H1 (cell line): ENCODE measurements at regions of chr12 and their contacts with region 1.

Region 1: DNA sequence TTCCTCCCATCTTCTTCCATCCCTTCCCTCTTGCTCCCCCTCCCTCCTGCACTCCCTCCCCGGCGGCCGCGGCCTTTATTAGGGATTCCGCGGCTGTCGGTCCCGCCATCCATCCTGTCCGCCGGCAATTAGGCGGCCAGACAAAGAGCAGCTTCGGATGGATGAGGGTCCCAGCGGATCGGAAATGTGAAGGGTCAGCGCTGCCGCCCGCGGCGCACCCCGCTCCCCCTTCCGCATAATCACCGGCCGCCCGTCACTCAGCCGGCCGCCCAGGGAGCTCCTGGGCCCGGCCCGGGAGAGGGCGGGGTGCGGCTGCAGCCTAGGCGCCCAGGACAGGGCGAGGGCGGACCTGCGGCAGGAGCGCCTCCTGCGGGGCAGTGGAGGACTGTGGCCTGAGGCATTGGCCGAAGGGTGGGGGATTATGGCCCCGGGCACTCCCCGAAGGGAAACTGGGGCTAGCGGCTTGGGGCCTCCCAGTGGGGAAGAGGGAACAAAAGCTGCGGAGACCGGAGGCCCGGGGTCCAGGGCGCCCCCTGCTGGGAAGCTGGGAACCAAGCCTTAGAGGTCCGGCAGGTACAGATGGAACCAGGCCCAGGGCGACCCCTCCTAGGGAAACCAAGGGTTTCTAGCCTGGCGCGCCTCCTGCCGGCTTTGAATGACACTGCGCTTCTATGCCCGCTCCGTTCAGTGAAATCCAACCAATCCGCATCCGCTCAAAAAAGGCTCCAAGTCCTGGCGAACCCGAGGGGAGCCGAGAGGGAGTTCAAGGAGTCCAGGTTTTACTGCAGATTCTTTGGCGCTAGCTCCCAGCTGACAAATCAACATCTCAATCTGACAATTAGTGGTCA is 4.4 kb upstream of the DNAJC22 start:
- DNase-seq: peak; percentile 93 to 99
- H3K4me3 ChIP-seq: peak overlapping the region; percentile 34 to 78 (median 67)
- H3K27ac ChIP-seq: no peak overlapping the region
- H3K4me1 ChIP-seq: peaks cover 4 to 61% (median 41%) of the 10 kb centered on the region in 4 experiments
- H3K27me3 ChIP-seq: peaks cover 81 to 99% (median 97%) of the 10 kb centered on the region in 4 experiments
- CTCF ChIP-seq: peak; percentile 71 to 93 (median 90)
- EP300 ChIP-seq: no peak; a peak in 1 of 3 replicates
- POLR2A ChIP-seq: no peak
- RAD21 ChIP-seq: peak; percentile 59 to 63

Region 2: DNA sequence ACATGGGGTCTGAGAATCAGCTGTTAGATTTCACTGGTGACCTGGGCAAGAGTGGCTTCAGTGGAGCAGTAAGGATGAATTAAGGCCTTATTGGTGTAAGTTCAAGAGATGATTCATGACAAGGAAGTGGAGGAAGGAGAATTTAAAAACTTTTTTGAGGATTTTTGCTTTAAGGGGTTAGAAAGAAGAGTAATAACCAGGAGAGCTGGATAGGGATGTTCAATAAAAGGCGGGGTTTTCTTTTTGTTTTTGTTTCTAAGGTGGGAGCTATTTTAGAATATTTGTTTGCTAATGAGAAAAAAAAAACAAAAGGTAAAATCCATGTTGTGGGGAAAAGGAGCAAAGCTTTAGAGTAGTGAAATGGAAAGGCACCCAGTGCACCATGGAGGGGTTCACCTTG is 195.9 kb before region 1 on chr12:
- CTCF ChIA-PET with region 1: no interaction called
- POLR2A ChIA-PET with region 1: no interaction called
- DNase-seq: no peak
- H3K4me3 ChIP-seq: no peak overlapping the region
- H3K27ac ChIP-seq: no peak overlapping the region
- H3K4me1 ChIP-seq: no peaks in the 10 kb centered on the region
- H3K27me3 ChIP-seq: no peaks in the 10 kb centered on the region
- CTCF ChIP-seq: no peak
- EP300 ChIP-seq: no peak
- POLR2A ChIP-seq: no peak
- RAD21 ChIP-seq: no peak

Region 3: DNA sequence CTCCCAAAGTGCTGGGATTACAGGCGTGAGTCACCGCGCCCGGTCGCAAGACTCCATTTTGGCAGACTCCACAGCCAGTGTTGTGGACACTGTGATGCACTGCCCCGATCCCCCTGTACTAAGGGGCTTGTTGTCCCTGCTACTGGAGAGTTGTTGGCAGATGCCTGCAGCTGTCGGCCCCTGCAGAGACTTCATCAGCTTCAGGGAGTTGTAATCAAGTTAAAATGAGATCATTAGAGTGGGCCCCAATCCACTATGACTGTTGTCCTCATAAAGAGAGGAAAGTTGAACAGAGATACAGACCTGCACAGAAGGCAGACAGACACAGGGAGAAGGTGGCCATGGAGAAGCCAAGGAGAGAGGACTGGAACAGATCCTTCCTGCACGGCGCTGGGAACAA is 129.7 kb before region 1 on chr12:
- CTCF ChIA-PET with region 1: no interaction called
- POLR2A ChIA-PET with region 1: no interaction called
- DNase-seq: no peak
- H3K4me3 ChIP-seq: no peak overlapping the region
- H3K27ac ChIP-seq: no peak overlapping the region
- H3K4me1 ChIP-seq: peaks cover 0 to 6% (median 4%) of the 10 kb centered on the region in 4 experiments; a peak in 4 of 7 replicates
- H3K27me3 ChIP-seq: no peaks in the 10 kb centered on the region
- CTCF ChIP-seq: no peak
- EP300 ChIP-seq: no peak
- POLR2A ChIP-seq: no peak
- RAD21 ChIP-seq: no peak

Region 4: GRCh38 chr12:49279706-49280159 is 62.6 kb before region 1 on chr12:
- CTCF ChIA-PET with region 1: interaction called, 10 read pairs
- POLR2A ChIA-PET with region 1: interaction called, 4 read pairs
- DNase-seq: no peak
- H3K4me3 ChIP-seq: no peak overlapping the region
- H3K27ac ChIP-seq: no peak overlapping the region
- H3K4me1 ChIP-seq: peaks cover 0 to 7% (median 5%) of the 10 kb centered on the region in 4 experiments; a peak in 3 of 7 replicates
- H3K27me3 ChIP-seq: no peaks in the 10 kb centered on the region
- CTCF ChIP-seq: no peak
- EP300 ChIP-seq: no peak
- POLR2A ChIP-seq: no peak
- RAD21 ChIP-seq: no peak

Region 5: GRCh38 chr12:49296034-49296835 is 46.1 kb before region 1 on chr12:
- CTCF ChIA-PET with region 1: interaction called, 276 read pairs
- POLR2A ChIA-PET with region 1: interaction called, 26 read pairs
- DNase-seq: peak in 1 of 2 experiments; percentile 91
- H3K4me3 ChIP-seq: peak overlapping the region; percentile 4 to 59 (median 34); a peak in 7 of 8 replicates
- H3K27ac ChIP-seq: no peak overlapping the region
- H3K4me1 ChIP-seq: peaks cover 0 to 36% (median 17%) of the 10 kb centered on the region in 4 experiments; a peak in 6 of 7 replicates
- H3K27me3 ChIP-seq: peaks cover 50 to 72% (median 68%) of the 10 kb centered on the region in 4 experiments
- CTCF ChIP-seq: peak in 2 of 3 experiments; percentile 89; a peak in 3 of 4 replicates
- EP300 ChIP-seq: no peak
- POLR2A ChIP-seq: no peak
- RAD21 ChIP-seq: peak; percentile 31 to 42; a peak in 2 of 4 replicates

Region 6: GRCh38 chr12:49322708-49323523 is 19.4 kb before region 1 on chr12 and contains the start of gene TROAP:
- CTCF ChIA-PET with region 1: interaction called, 33 read pairs
- POLR2A ChIA-PET with region 1: interaction called, 14 read pairs
- DNase-seq: peak; percentile 94 to 95
- H3K4me3 ChIP-seq: peak within 1 kb of the TSS; percentile 87 to 96 (median 90)
- H3K27ac ChIP-seq: peak within 1 kb of the TSS; percentile 66
- H3K4me1 ChIP-seq: peaks cover 4 to 13% (median 6%) of the 10 kb centered on the region in 4 experiments; a peak in 6 of 7 replicates
- H3K27me3 ChIP-seq: no peaks in the 10 kb centered on the region
- CTCF ChIP-seq: no peak
- EP300 ChIP-seq: no peak
- POLR2A ChIP-seq: peak in 1 of 2 experiments; percentile 70; a peak in 2 of 3 replicates
- RAD21 ChIP-seq: no peak
- total RNA-seq, gene TROAP: 52.0 and 54.0 TPM in 2 replicates

Region 7: GRCh38 chr12:49515266-49515665 is 173.0 kb after region 1 on chr12:
- CTCF ChIA-PET with region 1: interaction called, 538 read pairs
- POLR2A ChIA-PET with region 1: no interaction called
- DNase-seq: no peak
- H3K4me3 ChIP-seq: no peak overlapping the region
- H3K27ac ChIP-seq: no peak overlapping the region
- H3K4me1 ChIP-seq: no peaks in the 10 kb centered on the region
- H3K27me3 ChIP-seq: no peaks in the 10 kb centered on the region
- CTCF ChIP-seq: no peak
- EP300 ChIP-seq: no peak
- POLR2A ChIP-seq: no peak
- RAD21 ChIP-seq: no peak

Region 8: DNA sequence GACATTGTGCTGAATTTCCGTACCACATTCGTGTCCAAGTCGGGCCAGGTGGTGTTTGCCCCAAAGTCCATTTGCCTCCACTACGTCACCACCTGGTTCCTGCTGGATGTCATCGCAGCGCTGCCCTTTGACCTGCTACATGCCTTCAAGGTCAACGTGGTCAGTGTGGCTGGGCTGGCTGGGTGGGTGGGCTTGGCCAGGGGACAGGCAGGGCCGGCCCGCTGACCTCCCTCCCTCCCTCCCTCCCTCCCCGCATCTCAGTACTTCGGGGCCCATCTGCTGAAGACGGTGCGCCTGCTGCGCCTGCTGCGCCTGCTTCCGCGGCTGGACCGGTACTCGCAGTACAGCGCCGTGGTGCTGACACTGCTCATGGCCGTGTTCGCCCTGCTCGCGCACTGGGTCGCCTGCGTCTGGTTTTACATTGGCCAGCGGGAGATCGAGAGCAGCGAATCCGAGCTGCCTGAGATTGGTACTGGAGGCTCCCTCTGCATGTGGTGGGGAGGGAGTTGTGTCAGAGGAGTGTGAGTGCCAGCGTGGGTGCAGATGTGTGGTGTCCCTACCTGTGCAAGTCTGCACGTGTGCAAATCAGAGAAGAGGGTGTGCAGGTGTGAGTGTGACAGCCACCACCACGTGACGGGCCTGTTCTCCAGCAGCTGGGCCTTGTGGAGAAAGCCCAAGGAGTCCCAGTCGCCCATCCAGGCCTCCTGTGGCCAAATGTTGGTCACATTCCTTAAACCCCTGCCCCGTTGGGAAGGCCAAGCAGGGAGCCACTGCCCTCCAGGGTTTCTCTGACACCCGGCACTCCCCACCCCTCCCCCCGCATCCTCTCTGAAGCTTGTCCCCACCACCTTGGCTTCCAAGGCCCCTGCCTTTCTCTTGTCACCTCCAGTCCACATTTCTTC is 201.9 kb after region 1 on chr12:
- CTCF ChIA-PET with region 1: interaction called, 16 read pairs
- POLR2A ChIA-PET with region 1: interaction called, 3 read pairs
- DNase-seq: no peak
- H3K4me3 ChIP-seq: peak overlapping the region; percentile 32 to 51 (median 44)
- H3K27ac ChIP-seq: no peak overlapping the region
- H3K4me1 ChIP-seq: peaks cover 0 to 31% (median 17%) of the 10 kb centered on the region in 4 experiments; a peak in 6 of 7 replicates
- H3K27me3 ChIP-seq: peaks cover 46 to 98% (median 94%) of the 10 kb centered on the region in 4 experiments
- CTCF ChIP-seq: no peak
- EP300 ChIP-seq: no peak
- POLR2A ChIP-seq: no peak
- RAD21 ChIP-seq: no peak

Region 9: DNA sequence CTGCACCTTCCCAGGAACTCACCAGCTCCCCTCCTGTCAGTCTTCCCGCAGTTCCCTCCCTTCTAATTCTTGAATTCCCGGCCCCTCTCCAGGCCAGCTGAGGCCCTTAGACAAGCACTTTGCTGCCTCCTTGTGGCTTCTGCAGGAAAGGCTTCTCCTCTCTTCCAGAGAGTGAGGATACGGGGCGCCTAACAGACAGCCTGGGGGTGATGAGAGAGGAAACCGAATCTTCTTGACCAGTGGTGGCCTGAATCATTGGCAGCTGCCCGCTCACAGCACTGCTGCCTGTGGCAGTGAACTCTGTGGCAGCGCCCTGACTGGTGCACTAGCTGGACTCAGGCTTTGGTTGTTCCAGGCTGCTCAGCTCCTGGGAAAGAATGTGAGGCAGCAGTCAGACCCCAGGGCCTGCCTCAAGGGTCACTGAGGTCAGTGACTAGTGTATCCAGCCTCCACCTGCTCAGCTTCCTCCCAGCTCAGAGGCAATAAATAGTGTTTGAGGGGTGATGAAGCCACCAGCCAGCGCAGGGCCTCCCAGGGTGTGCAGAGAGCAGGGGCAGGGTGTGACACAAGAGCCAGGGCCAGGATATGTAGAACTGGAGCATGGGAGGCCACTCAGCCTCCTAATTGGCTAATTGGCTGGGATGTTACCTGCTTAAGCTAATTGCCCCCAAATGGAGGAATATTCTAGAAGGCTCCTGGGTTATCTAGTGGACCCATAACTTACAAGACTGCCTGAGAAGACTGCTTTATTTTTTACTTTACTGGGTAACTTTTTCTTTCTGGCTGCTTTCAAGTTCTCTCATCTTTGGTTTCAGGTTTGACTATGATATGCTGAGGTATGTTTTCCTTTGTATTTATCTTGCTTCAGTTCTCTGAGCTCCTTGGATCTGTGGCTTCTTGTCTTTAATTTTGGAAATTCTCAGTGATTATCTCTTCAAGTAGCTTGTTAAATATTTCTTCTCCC is 238.6 kb after region 1 on chr12:
- CTCF ChIA-PET with region 1: interaction called, 13 read pairs
- POLR2A ChIA-PET with region 1: no interaction called
- DNase-seq: peak; percentile 77 to 92
- H3K4me3 ChIP-seq: no peak overlapping the region
- H3K27ac ChIP-seq: no peak overlapping the region
- H3K4me1 ChIP-seq: peaks cover 0 to 6% (median 4%) of the 10 kb centered on the region in 4 experiments; a peak in 4 of 7 replicates
- H3K27me3 ChIP-seq: no peaks in the 10 kb centered on the region
- CTCF ChIP-seq: peak; percentile 74 to 97 (median 94)
- EP300 ChIP-seq: no peak
- POLR2A ChIP-seq: no peak
- RAD21 ChIP-seq: peak; percentile 88